ENCODE measurements at regions of chr12 and their contacts with region 1.

Region 1: DNA sequence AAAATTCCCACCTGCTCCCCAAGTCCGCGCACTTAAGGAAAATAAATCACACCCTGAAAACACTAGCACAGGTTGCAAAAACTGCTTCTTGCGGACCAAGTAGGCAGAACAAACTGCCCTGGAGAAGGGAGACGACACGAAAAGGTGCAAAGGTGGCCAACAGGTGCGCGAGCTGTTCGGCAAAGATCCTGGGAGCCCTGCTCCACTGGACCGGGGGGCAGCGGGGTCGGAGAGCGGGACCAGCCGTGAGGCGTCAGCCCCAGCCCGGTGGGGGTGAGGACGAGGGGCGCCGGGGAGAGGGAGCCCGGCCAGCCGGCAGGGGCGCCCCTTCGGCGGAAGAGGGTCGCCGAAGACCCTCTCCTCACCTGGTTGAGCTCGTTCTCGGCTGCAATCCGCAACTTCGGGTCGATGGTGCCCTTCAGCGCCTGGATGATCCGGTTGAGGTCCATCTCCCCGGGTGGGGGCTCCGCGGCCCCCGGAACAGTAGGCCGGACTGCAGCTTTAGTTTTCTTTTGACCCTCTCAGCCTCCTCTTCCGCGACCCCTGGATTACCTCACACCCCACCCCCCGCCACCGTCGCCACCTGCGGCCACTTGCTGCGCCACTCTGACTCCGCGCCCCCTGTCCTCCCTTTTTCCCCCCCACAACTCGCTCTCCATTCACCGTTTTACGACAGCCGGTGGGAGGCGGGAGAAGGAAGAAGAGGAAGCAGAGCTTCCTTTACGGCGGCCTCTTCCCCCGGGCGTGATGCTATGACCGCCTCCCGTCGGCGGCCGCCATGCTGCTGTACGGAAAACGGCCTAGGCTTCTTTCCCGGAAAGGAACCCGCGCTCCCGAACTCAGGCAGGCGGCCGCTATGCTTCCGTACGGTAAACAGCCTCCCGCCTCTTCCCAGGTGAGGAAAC is at the start of gene IPO8:
- DNase-seq: peak; percentile 92 to 95
- ATAC-seq: peak; percentile 94 to 98 (median 97)
- H3K4me3 ChIP-seq: peak within 1 kb of the TSS; percentile 88 to 100 (median 95)
- H3K27ac ChIP-seq: peak within 1 kb of the TSS in 9 of 10 donors; percentile 56 to 92 (median 78)
- H3K4me1 ChIP-seq: peaks cover 7 to 51% (median 36%) of the 10 kb centered on the region in 9 donors
- H3K27me3 ChIP-seq: no peaks in the 10 kb centered on the region
- CTCF ChIP-seq: peak in 7 of 9 donors; percentile 7 to 43 (median 34)
- total RNA-seq, gene IPO8: 20.8 to 30.7 (median 24.8) TPM

Region 2: DNA sequence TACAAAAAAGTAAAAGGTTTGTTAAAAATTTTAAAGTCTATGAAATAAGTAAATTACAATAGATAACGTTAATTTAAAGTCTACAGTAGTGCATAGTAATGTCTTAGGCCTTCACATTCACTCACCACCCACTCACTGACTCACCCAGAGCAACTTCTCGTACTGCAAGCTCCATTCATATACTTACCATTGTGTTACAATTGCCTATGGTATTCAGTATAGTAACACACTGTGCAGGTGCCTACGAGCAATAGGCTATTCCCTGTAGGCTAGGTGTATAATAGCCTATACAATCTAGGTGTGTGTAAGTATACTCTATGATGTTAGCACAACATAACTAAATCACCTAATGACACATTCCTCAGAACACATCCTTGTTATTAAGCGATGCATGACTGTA is 476.4 kb before region 1 on chr12:
- intact Hi-C with region 1: no loop called
- DNase-seq: no peak
- ATAC-seq: no peak
- H3K4me3 ChIP-seq: no peak overlapping the region
- H3K27ac ChIP-seq: no peak overlapping the region
- H3K4me1 ChIP-seq: no peaks in the 10 kb centered on the region
- H3K27me3 ChIP-seq: no peaks in the 10 kb centered on the region
- CTCF ChIP-seq: no peak

Region 3: DNA sequence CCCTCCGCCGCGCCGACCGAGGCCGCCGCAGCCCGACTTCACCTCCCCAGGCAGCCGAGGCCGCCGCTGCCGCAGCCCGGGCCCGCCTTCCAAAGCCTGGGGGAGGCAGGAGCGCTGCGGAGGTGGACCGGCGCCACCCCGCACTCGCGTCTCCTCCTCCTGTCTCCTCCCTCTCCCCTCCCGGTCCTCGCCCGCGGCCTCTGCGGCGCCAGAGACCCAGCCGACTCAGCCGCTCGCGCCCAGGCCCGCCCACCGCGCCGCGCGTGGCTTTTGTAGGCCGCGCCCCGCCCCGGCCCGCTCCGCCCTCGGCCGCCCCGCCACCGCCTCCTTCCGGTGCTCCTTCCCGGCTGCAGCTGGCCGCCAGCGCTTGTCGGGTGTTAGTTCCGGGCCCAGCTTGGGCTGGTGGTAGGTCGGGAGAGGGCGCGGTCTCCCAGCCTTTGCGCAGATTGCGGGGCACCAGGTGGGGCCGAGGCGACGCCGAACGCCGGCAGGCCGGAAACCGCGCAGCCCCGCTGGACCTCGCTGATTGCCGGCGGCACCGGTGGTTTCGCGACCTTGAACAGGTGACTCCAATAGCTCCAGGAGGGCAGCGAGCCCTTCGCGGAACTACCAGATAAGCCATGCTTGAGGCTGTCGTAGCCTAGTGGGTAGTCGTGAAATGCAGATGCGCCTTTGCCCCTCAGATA is 59.4 kb after region 1 on chr12 and contains the start of gene CAPRIN2:
- intact Hi-C with region 1: loop called in 6 of 10 experiments (anchors 2 to 10 kb)
- DNase-seq: peak; percentile 94 to 98
- ATAC-seq: peak; percentile 97 to 100 (median 99)
- H3K4me3 ChIP-seq: peak within 1 kb of the TSS; percentile 55 to 94 (median 82)
- H3K27ac ChIP-seq: peak within 1 kb of the TSS; percentile 47 to 92 (median 84)
- H3K4me1 ChIP-seq: peaks cover 5 to 36% (median 22%) of the 10 kb centered on the region in 9 donors
- H3K27me3 ChIP-seq: no peaks in the 10 kb centered on the region
- CTCF ChIP-seq: peak in 8 of 9 donors; percentile 14 to 70 (median 44)
- total RNA-seq, gene CAPRIN2: 22.2 to 33.0 (median 28.9) TPM

Region 4: GRCh38 chr12:30795410-30796312 is 100.2 kb after region 1 on chr12:
- intact Hi-C with region 1: loop called in 3 of 10 experiments (anchors 10 kb)
- DNase-seq: peak; percentile 51 to 65
- ATAC-seq: peak; percentile 73 to 88 (median 84)
- H3K4me3 ChIP-seq: peak overlapping the region; percentile 51 to 74 (median 66)
- H3K27ac ChIP-seq: peak overlapping the region in 8 of 10 donors; percentile 29 to 91 (median 70)
- H3K4me1 ChIP-seq: peaks cover 4 to 28% (median 16%) of the 10 kb centered on the region in 9 donors
- H3K27me3 ChIP-seq: peaks cover 0 to 37% (median 0%) of the 10 kb centered on the region in 7 donors
- CTCF ChIP-seq: peak in 1 of 9 donors; percentile 18

Region 5: DNA sequence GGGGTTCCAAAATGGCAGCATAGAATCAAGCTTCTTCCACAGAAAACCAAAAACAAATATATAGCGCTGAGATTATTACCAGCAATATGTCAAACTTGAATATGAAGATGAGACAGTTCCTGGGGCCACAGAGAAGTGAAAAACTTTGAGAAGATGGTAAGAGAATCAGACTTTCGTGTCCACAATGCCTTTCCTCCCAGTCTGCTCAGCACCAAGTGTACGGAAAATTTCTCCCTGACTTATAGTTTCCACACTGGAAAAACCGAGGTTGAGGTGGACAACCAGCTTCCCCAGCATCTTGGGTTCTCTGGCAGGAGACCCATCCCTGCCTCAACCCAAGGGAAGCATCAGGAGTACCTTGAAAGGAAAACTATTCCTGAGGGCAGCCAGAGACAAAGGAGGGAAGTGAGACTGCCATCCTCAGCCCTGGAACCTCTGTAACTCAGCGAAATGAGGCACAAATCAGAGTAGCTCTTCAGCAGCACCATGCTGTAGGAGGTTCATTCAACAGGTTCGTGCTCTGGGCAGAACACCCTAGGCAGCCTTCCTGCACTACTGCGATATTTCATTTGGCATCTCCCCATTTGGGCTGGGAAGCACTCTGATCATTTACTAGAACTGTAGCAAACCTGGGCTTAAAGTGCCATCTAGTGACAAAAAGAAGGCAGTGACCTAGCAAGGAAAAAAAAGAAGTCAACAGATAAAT is 111.7 kb after region 1 on chr12:
- intact Hi-C with region 1: loop called in 3 of 10 experiments (anchors 5 to 10 kb)
- DNase-seq: peak in 1 of 2 donors; percentile 52
- ATAC-seq: peak; percentile 78 to 94 (median 86)
- H3K4me3 ChIP-seq: no peak overlapping the region
- H3K27ac ChIP-seq: no peak overlapping the region
- H3K4me1 ChIP-seq: peaks cover 0 to 4% (median 0%) of the 10 kb centered on the region in 9 donors
- H3K27me3 ChIP-seq: no peaks in the 10 kb centered on the region
- CTCF ChIP-seq: peak; percentile 57 to 83 (median 80)